BJ (cell line): ENCODE measurements at regions of chr20 and their contacts with region 1.

Region 1: DNA sequence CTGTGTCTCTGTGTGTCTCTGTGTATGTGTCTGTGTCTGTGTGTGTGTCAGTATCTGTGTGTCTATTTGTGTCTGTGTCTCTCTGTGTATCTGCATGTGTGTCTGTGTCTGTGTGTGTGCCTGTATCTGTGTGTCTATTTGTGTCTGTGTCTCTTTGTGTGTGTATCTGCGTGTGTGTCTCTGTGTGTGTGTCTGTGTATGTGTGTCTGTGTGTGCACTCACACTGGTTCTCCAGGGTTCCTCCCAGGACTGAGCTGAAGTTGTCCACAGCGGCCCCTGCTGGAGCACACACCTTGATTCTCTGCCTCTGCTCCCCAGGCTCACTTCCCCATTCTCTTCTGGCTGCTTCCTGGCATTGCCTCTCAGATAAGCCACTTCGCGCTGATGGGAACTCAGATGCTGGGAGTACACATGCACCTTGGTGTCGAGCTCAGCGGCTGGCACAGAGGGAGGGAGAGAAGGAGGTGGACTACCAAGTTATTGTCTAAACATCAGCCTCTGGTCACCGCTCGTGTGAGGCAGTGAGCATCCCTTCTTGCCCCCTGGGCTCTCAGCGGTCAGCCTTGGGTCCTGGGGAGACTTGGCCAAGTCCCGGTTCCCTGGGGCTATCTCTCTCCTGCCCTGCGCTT is 104.9 kb upstream of the NXT1 start:
- DNase-seq: no peak
- H3K4me3 ChIP-seq: no peak overlapping the region
- H3K27me3 ChIP-seq: peaks cover 1% of the 10 kb centered on the region; the same call in 1 of the 2 replicates
- CTCF ChIP-seq: peak; percentile 44

Region 2: DNA sequence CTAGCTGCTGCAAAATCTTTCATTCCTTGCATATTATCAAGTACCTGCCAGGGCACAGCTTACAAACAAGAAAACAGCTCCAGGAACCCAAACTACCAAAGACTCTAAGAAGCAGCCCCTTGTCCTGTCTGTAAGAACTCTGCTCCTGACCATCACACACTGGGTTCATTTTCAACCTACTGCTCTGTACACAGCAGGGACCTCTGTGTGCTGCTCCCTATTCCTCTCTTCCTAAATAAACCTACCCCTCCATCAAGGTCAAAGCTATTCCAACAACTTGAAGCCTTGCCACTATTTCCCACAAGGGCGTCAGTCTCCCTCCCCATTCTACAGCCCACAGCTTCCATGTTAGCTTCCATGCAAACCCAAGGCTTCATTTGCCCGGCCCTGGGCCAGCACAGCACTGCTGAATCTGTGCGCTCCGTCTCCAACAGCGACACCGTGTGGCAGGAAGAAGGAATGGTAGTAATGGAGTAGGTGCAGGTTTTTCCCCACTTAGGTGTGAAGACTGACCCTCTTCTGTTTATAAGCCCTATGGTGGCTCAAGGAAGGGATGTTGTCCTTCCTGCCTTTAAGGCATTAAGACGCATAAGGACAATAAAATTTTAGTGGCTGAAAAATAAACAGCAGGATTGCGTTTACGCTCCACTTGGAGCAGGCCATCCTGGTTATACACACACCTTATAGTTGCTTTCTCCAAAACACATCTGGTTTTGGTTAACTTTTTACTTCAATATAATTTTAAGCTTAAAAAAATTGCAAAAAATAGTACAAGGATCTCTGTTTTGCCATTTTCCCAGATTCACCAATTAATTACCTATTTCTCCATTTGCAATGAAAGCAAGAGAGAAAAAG is 10.3 kb before region 1 on chr20:
- CTCF ChIA-PET with region 1: interaction called, 16 read pairs
- POLR2A ChIA-PET with region 1: no interaction called
- DNase-seq: no peak
- H3K4me3 ChIP-seq: no peak overlapping the region
- H3K27me3 ChIP-seq: no peaks in the 10 kb centered on the region
- CTCF ChIP-seq: peak; percentile 75

Region 3: DNA sequence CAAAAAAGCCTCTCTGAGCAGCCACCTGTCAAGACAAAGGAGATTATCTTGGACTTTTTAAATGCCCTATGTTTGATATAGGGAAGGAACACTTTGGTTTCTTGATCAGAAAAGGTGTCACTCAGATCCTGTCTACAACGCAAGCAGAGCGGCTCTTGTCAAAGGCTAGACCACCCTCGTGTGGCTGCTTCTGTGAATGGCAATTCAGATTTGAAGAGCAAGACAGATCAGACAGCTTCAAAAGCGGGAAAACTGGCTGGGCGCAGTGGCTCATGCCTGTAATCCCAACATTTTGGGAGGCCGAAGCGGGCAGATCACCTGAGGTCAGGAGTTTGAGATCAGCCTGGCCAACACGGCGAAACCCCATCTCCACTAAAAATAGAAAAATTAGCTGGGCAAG is 94.9 kb after region 1 on chr20:
- CTCF ChIA-PET with region 1: interaction called, 10 read pairs
- POLR2A ChIA-PET with region 1: no interaction called
- DNase-seq: no peak
- H3K4me3 ChIP-seq: no peak overlapping the region
- H3K27me3 ChIP-seq: peaks cover 2% of the 10 kb centered on the region; the same call in 1 of the 2 replicates
- CTCF ChIP-seq: peak; percentile 57

Region 4: DNA sequence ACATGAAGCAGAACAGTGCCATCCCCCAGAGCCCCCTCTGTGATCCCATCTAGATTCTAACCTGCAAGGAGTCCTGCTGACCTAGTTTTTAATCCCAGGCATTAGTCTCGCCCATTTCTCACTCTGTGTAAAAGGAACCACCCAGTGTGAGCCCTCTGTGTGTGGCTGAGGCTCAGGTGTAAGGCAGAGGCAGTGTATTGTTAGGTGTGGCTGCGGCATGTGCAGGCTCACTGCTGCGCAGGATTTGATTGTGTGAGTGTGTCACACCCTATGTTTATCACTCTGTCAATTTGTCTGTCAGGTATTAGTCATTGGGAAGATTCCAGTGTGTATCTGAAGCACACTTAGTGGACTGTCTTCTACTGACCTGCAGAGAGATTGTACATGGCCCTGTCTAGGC is 231.6 kb after region 1 on chr20:
- CTCF ChIA-PET with region 1: no interaction called
- POLR2A ChIA-PET with region 1: no interaction called
- DNase-seq: no peak
- H3K4me3 ChIP-seq: no peak overlapping the region
- H3K27me3 ChIP-seq: no peaks in the 10 kb centered on the region
- CTCF ChIP-seq: no peak